Calu3 (cell line): ENCODE measurements at regions of chr2 and their contacts with region 1.

Region 1: GRCh38 chr2:170815746-170816503 is 762 bp upstream of the GAD1 start:
- DNase-seq: peak; percentile 88
- H3K4me3 Mint-ChIP-seq: peak overlapping the region; percentile 85
- H3K27ac Mint-ChIP-seq: no peak overlapping the region
- H3K4me1 Mint-ChIP-seq: peaks cover 22% of the 10 kb centered on the region
- H3K27me3 Mint-ChIP-seq: peaks cover 31% of the 10 kb centered on the region
- CTCF ChIP-seq: peak; percentile 82

Region 2: DNA sequence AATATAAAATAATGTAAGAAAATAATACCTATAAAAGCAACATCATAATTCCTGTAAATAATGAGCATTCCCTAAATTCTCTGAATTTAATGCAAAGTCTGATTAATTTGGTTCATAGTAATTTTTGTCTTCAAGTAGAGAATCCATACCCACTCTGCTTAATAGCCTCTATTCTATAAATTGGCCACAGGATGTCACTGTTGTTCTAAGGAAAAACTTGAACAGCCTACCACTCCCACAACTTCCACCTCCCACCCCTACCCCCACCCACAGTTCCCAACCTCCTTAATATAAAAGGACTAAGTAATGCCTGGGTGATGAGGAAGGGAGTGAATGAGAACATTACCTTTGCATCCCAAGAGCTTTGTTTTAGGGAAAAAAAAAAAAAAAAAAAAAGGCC is 1363.8 kb before region 1 on chr2:
- CTCF ChIA-PET with region 1: no interaction called
- intact Hi-C with region 1: loop called (anchors 10 kb)
- DNase-seq: peak; percentile 13
- H3K4me3 Mint-ChIP-seq: no peak overlapping the region
- H3K27ac Mint-ChIP-seq: no peak overlapping the region
- H3K4me1 Mint-ChIP-seq: no peaks in the 10 kb centered on the region
- H3K27me3 Mint-ChIP-seq: peaks cover 12% of the 10 kb centered on the region
- CTCF ChIP-seq: peak; percentile 30

Region 3: GRCh38 chr2:170361090-170361936 is 454.6 kb before region 1 on chr2:
- CTCF ChIA-PET with region 1: interaction called, 17 read pairs
- intact Hi-C with region 1: no loop called
- DNase-seq: peak; percentile 56
- H3K4me3 Mint-ChIP-seq: no peak overlapping the region
- H3K27ac Mint-ChIP-seq: no peak overlapping the region
- H3K4me1 Mint-ChIP-seq: peaks cover 10% of the 10 kb centered on the region
- H3K27me3 Mint-ChIP-seq: peaks cover 18% of the 10 kb centered on the region
- CTCF ChIP-seq: peak; percentile 65

Region 4: DNA sequence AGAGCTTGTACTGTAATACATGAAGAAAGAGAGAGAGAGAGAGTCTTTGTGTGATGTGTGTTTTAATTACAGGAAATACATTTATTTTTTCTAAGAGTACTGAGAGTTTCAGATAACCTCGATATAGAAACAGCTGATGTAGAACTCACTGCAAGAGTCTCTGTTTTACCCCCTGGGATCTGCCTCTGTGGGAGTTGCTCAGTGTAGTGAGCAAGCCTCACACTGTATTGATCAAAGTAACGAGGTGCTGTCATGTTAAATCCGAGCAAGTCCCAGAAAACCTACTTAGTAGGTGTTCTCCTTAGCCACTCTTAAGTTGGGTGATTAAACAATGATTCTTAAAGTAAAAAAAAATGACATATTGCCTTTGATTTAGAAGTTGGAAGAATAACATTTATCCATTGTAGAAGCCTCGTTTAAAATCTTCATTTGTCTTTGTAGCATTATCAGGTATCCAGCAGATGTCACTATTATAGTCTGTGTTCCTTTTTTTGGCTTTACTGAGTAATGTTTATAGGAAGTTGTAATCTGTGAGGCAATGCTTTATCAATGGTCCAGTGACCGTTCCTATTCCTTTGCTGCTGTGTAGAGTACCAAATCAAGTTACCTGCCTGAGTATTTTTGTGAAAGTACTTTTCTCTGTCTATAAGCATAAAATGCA is 419.0 kb before region 1 on chr2:
- CTCF ChIA-PET with region 1: interaction called, 3 read pairs
- intact Hi-C with region 1: loop called (anchors 1 kb)
- DNase-seq: no peak
- H3K4me3 Mint-ChIP-seq: no peak overlapping the region
- H3K27ac Mint-ChIP-seq: no peak overlapping the region
- H3K4me1 Mint-ChIP-seq: peaks cover 8% of the 10 kb centered on the region
- H3K27me3 Mint-ChIP-seq: no peaks in the 10 kb centered on the region
- CTCF ChIP-seq: no peak

Region 5: GRCh38 chr2:170715062-170715931 is 100.6 kb before region 1 on chr2 and contains the start of gene SP5:
- CTCF ChIA-PET with region 1: interaction called, 4 read pairs
- intact Hi-C with region 1: loop called (anchors 10 kb)
- DNase-seq: peak; percentile 55
- H3K4me3 Mint-ChIP-seq: peak within 1 kb of the TSS; percentile 74
- H3K27ac Mint-ChIP-seq: peak within 1 kb of the TSS; percentile 48
- H3K4me1 Mint-ChIP-seq: peaks cover 9% of the 10 kb centered on the region
- H3K27me3 Mint-ChIP-seq: peaks cover 26% of the 10 kb centered on the region
- CTCF ChIP-seq: no peak
- total RNA-seq, gene SP5: 0.73 TPM in 2 replicates

Region 6: GRCh38 chr2:170905864-170906263 is 89.9 kb after region 1 on chr2:
- CTCF ChIA-PET with region 1: no interaction called
- intact Hi-C with region 1: no loop called
- DNase-seq: no peak
- H3K4me3 Mint-ChIP-seq: no peak overlapping the region
- H3K27ac Mint-ChIP-seq: no peak overlapping the region
- H3K4me1 Mint-ChIP-seq: no peaks in the 10 kb centered on the region
- H3K27me3 Mint-ChIP-seq: no peaks in the 10 kb centered on the region
- CTCF ChIP-seq: no peak

Region 7: DNA sequence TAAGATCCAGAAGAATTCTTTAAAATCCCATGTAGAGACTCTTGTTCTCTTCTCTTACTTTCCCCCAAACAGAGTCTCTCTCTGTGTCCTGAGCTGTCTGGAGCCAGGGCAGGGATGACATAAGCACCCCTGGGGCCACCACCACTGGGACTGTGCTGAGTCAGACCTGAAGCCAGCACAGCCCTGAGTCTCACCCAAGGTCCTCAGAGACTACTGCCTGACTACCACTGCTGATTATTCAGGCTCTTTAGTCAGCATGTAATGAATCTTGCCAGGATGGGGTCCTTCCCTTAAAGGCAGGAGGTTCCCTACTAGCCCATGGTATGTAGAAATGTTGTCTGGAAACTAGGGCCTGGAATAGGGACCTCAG is 836.5 kb after region 1 on chr2:
- CTCF ChIA-PET with region 1: no interaction called
- intact Hi-C with region 1: no loop called
- DNase-seq: no peak
- H3K4me3 Mint-ChIP-seq: no peak overlapping the region
- H3K27ac Mint-ChIP-seq: no peak overlapping the region
- H3K4me1 Mint-ChIP-seq: no peaks in the 10 kb centered on the region
- H3K27me3 Mint-ChIP-seq: peaks cover 80% of the 10 kb centered on the region
- CTCF ChIP-seq: no peak